Heart left ventricle (tissue), 16 donors: ENCODE measurements at regions of chr7 and their contacts with region 1.

Region 1: DNA sequence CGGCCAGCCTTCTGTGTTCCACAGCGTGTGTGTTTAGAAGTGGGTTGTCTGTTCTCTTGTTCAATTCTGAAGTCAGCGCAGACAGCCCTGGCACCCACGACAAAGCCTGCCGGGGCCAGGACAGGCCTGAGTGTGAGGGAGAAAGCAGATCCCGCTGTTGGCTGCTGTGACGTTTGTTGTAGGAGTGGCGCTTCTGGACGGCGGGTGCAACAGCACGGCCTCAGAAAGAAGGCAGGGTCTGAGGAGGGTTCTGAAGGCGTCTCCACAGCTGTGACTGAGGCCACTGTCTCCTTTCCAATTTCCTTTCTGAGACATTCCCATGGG is 76.2 kb downstream of the VIPR2 start:
- DNase-seq: peak; percentile 79 to 92 (median 86)
- ATAC-seq: peak; percentile 86 to 89 (median 88)
- H3K4me3 ChIP-seq: no peak overlapping the region
- H3K27ac ChIP-seq: peak overlapping the region; percentile 32 to 94 (median 79)
- H3K4me1 ChIP-seq: peaks cover 0 to 62% (median 36%) of the 10 kb centered on the region in 12 donors
- H3K27me3 ChIP-seq: no peaks in the 10 kb centered on the region
- CTCF ChIP-seq: peak in 1 of 12 donors; percentile 9
- POLR2A ChIP-seq: no peak

Region 2: DNA sequence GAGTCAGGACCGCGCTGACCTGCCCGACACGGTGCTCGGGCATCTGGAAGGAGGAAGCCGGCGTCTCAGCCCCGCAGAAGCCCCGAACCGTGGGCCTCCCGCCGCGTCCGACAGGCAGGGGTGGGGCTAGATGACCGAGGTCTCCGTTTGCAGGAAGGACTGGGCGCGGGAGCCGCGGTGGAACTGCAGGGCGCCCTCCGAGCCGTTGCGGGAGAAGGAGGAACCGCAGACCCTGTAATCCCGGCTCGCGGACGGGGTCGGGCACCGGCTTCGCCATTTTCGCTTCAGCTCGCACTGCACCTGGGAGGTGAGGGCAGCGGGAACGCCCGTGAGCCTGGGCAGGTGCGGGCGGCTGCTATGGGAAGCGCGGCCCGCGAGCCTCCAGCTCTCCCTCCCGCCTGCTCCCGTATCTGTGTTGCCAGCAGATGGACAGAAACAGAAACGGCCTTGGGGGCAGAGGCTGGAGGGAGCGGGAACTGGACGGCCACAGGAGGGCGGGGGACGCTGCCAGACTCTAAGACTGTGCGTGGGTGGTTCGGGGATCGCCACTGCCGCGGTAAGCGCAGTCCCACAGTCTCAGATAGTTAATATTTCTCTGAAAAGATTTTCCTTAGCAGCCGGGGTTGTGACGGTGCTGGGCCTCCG is 37.8 kb before region 1 on chr7:
- intact Hi-C with region 1: loop called in 1 of 10 experiments (anchors 5 kb)
- DNase-seq: peak; percentile 57 to 76 (median 65)
- ATAC-seq: peak; percentile 65 to 74 (median 70)
- H3K4me3 ChIP-seq: peak overlapping the region; percentile 31 to 68 (median 54)
- H3K27ac ChIP-seq: peak overlapping the region; percentile 13 to 86 (median 71)
- H3K4me1 ChIP-seq: peaks cover 0 to 28% (median 10%) of the 10 kb centered on the region in 12 donors
- H3K27me3 ChIP-seq: peaks cover 0 to 8% (median 0%) of the 10 kb centered on the region in 9 donors
- CTCF ChIP-seq: peak in 11 of 12 donors; percentile 17 to 51 (median 34)
- POLR2A ChIP-seq: no peak